ENCODE measurements at regions of chr6 and their contacts with region 1.

Region 1: DNA sequence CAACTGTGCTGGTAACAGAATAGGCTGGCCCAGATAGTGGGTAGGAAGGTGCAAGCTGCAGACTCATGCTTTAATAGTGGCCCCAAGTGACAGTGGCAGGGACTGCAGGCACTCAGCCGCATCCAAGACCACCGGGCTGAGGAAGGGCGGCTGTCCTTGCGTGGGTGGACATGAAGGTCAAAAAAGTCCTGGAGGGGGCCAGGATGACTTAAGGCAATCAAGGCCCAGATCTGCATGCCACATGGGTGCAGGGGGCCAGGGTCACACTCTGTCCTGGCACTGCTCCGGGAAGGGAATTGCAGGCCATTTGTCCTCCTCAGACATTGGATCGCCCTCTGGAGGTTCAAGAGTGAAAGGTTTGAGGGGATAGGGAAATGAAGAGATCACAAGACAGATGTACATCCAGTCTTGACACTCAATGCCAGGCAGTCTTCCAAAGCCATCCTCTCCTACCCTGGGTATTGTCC is 10.4 kb upstream of the VNN2 start:
- DNase-seq: peak; percentile 38
- ATAC-seq: peak; percentile 86

Region 2: DNA sequence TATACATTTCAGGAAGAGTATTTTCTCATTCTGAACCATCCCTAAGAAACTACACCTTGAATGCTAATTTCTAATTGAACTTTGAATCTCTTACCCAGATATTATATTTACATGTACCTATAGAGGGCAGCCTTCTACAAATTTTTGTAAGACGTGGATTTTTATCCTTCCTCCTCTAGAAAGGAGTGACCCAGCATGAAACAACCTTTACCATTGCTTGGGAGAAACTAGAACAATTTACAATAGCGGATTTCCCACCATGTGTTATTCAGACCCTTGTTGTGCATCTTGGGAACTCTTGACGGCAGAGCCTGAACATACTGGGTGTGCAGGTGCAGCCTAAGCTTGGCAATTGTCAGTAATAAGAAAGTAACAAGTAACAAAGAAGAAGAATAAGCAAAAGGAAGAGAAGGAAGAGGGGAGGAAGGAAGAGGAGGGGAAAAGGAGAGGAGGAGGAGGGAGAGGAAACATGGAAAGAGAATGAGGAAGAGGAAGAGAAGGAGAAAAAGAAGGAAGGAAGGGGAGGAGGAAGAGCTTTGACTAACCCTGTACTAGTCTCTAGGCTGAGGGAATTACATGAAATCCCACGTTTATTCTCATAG is 98.3 kb before region 1 on chr6:
- intact Hi-C with region 1: loop called (anchors 10 kb)
- DNase-seq: no peak
- ATAC-seq: peak; percentile 59

Region 3: GRCh38 chr6:132798869-132799538 is 30.9 kb after region 1 on chr6:
- intact Hi-C with region 1: no loop called
- DNase-seq: peak; percentile 77
- ATAC-seq: peak; percentile 94

Region 4: GRCh38 chr6:133099573-133099972 is 331.5 kb after region 1 on chr6:
- intact Hi-C with region 1: no loop called
- DNase-seq: no peak
- ATAC-seq: no peak

Measured in left ventricle myocardium superior (tissue), 1 donor.